Panc1 (cell line): ENCODE measurements at regions of chr10 and their contacts with region 1.

Region 1: GRCh38 chr10:99435986-99436638 is 5.7 kb upstream of the GOT1 start:
- DNase-seq: peak; percentile 28
- ATAC-seq: peak; percentile 80
- H3K4me3 ChIP-seq: no peak overlapping the region
- H3K27ac ChIP-seq: no peak overlapping the region
- H3K4me1 ChIP-seq: peaks cover 13% of the 10 kb centered on the region; the same call in 1 of the 2 replicates
- H3K27me3 ChIP-seq: no peaks in the 10 kb centered on the region
- CTCF ChIP-seq: peak; percentile 72; the same call in 1 of the 2 replicates

Region 2: GRCh38 chr10:99450624-99451498 is 14.7 kb after region 1 on chr10:
- CTCF ChIA-PET with region 1: interaction called, 16 read pairs
- POLR2A ChIA-PET with region 1: no interaction called
- in situ Hi-C with region 1: no loop called
- intact Hi-C with region 1: no loop called
- DNase-seq: no peak
- ATAC-seq: peak; percentile 78
- H3K4me3 ChIP-seq: no peak overlapping the region
- H3K27ac ChIP-seq: no peak overlapping the region
- H3K4me1 ChIP-seq: peaks cover 5% of the 10 kb centered on the region
- H3K27me3 ChIP-seq: peaks cover 52% of the 10 kb centered on the region
- CTCF ChIP-seq: no peak

Region 3: DNA sequence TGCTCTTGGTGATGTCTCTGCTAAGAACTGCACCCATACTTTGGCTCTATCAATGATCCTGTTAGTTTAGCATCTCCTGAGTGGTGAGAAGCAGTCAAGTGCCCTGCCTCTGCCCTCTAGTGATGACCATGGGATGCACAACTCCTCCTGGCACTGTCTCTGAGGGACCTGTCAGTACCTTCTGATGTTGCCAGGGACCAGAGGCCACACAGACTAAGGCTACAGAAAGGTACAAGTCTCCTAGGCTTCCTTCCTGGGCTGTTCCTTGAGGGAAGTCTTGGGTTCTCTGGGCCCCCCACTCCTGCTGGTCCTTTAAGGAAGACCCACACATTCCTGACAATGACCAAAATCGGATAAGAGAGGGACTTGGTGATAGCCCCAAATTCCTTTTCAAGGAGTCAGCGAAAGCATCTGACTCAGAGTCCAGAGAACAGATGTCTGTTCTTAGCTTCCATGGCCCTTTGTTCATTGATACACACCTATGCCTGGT is 112.0 kb after region 1 on chr10:
- CTCF ChIA-PET with region 1: interaction called, 4 read pairs
- POLR2A ChIA-PET with region 1: no interaction called
- in situ Hi-C with region 1: no loop called
- intact Hi-C with region 1: loop called (anchors 5 kb)
- DNase-seq: no peak
- ATAC-seq: peak; percentile 86
- H3K4me3 ChIP-seq: no peak overlapping the region
- H3K27ac ChIP-seq: no peak overlapping the region
- H3K4me1 ChIP-seq: no peaks in the 10 kb centered on the region; the same call in 1 of the 2 replicates
- H3K27me3 ChIP-seq: peaks cover 28% of the 10 kb centered on the region
- CTCF ChIP-seq: peak; percentile 76

Region 4: DNA sequence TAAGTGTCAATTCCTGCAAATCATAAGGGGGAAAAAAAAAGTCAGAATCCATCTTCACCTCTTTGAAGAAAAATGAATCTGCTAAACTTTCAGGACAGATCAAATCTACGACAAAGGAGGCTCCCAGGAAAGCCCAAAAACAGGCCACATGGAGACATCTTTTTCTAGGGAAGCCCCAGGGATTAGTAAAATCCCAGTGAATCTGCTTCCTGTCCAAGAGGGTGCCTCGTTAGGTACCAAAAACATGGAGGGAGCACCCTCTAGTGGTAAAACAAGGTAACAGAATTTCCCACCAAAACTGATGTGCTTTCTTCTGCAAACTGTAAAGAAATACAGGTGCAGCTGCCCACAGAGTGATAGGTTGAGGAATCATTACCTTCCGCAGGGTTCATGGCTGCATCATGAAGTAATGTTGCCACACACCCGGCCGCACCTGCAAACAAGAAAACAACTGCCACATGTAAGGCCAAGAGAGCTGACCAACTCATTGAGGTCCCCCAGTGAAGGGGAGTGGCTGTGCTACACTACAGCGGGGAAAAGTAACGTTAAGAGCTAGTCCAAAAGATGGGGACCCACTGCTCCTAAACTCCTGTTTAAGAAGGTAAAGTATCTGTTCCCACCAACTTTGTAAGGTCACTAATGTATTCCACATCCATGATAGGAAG is 176.2 kb after region 1 on chr10:
- CTCF ChIA-PET with region 1: interaction called, 14 read pairs
- POLR2A ChIA-PET with region 1: interaction called, 3 read pairs
- in situ Hi-C with region 1: no loop called
- intact Hi-C with region 1: loop called (anchors 2 kb)
- DNase-seq: peak; percentile 48
- ATAC-seq: peak; percentile 82
- H3K4me3 ChIP-seq: no peak overlapping the region
- H3K27ac ChIP-seq: no peak overlapping the region
- H3K4me1 ChIP-seq: peaks cover 2% of the 10 kb centered on the region
- H3K27me3 ChIP-seq: no peaks in the 10 kb centered on the region
- CTCF ChIP-seq: peak; percentile 93

Region 5: GRCh38 chr10:99799613-99800012 is 363.5 kb after region 1 on chr10:
- CTCF ChIA-PET with region 1: no interaction called
- POLR2A ChIA-PET with region 1: no interaction called
- in situ Hi-C with region 1: no loop called
- intact Hi-C with region 1: no loop called
- DNase-seq: no peak
- ATAC-seq: peak; percentile 41; the same call in 1 of the 2 replicates
- H3K4me3 ChIP-seq: no peak overlapping the region
- H3K27ac ChIP-seq: no peak overlapping the region; the same call in 1 of the 2 replicates
- H3K4me1 ChIP-seq: no peaks in the 10 kb centered on the region
- H3K27me3 ChIP-seq: no peaks in the 10 kb centered on the region
- CTCF ChIP-seq: peak; percentile 34